ENCODE measurements at regions of chr6 and their contacts with region 1.

Region 1: GRCh38 chr6:105992315-105992961 is 93.7 kb upstream of the PRDM1 start:
- DNase-seq: peak; percentile 90
- H3K4me3 Mint-ChIP-seq: peak overlapping the region; percentile 88
- H3K27ac Mint-ChIP-seq: peak overlapping the region; percentile 74
- H3K4me1 Mint-ChIP-seq: peaks cover 22% of the 10 kb centered on the region
- H3K27me3 Mint-ChIP-seq: peaks cover 72% of the 10 kb centered on the region

Region 2: GRCh38 chr6:105492706-105493673 is 499.4 kb before region 1 on chr6:
- CTCF ChIA-PET with region 1: no interaction called
- intact Hi-C with region 1: loop called (anchors 5 kb)
- DNase-seq: peak; percentile 7
- H3K4me3 Mint-ChIP-seq: no peak overlapping the region
- H3K27ac Mint-ChIP-seq: no peak overlapping the region
- H3K4me1 Mint-ChIP-seq: peaks cover 6% of the 10 kb centered on the region
- H3K27me3 Mint-ChIP-seq: no peaks in the 10 kb centered on the region

Region 3: DNA sequence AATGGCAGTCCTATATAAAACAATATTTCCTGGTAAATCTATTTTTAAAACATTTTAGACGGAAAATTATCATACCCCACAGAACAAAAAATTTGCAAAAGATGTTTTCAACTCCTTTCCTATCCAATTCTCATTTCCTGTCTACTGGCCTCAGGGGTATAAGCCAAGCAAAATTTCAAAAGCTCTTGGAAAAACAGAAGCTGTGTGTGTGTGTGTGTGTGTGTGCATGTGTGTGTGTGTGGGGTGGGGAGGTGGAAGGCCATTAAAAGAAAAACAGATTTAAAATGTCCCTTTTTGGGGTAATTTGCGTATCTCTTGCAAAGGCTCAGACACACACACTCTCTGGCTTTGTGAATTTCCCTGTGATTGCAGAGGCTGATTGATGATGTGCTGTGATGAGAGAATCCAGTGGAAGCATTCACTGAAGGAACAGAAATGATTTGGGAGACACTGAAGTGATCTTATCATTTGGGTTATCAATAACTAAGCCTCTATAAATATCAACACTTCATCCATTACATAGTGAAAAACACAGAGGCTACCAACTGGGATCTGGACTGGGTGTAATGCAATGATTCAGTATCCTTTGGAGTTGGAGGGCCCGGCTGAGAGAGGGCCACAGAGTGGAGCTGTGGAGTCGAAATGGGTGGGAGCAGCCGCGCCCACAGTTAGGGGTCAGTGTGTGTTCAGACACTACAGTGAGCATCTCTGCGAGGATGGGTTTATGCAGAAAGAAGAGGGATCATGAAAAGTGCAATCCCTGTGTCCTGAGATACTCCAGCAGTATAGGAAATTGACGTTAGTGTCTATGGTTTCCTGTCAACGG is 482.7 kb before region 1 on chr6:
- CTCF ChIA-PET with region 1: no interaction called
- intact Hi-C with region 1: no loop called
- DNase-seq: no peak
- H3K4me3 Mint-ChIP-seq: no peak overlapping the region
- H3K27ac Mint-ChIP-seq: no peak overlapping the region
- H3K4me1 Mint-ChIP-seq: no peaks in the 10 kb centered on the region
- H3K27me3 Mint-ChIP-seq: peaks cover 20% of the 10 kb centered on the region

Region 4: GRCh38 chr6:105536961-105537360 is 455.5 kb before region 1 on chr6:
- CTCF ChIA-PET with region 1: no interaction called
- intact Hi-C with region 1: no loop called
- DNase-seq: no peak
- H3K4me3 Mint-ChIP-seq: no peak overlapping the region
- H3K27ac Mint-ChIP-seq: no peak overlapping the region
- H3K4me1 Mint-ChIP-seq: no peaks in the 10 kb centered on the region
- H3K27me3 Mint-ChIP-seq: peaks cover 2% of the 10 kb centered on the region

Region 5: DNA sequence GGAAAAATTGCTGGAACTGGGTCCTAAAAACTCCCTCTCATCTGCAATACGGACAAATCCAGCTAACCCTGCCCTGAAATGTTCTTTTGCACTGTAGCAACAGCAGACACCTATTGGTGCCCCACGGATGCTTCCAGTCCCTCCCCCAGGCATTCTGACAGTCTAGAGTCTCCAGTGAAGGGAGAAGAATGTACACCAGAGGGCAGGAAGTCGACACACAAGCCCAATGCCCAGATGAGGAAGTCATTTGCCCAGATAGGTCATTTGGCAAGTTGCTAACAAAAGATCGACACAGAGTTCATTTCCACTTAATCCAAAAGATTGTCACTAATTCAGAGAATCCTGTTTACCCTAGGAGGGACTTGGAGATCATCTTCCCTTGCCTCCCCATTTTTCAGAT is 199.3 kb before region 1 on chr6:
- CTCF ChIA-PET with region 1: no interaction called
- intact Hi-C with region 1: loop called (anchors 5 kb)
- DNase-seq: peak; percentile 30
- H3K4me3 Mint-ChIP-seq: no peak overlapping the region
- H3K27ac Mint-ChIP-seq: no peak overlapping the region
- H3K4me1 Mint-ChIP-seq: peaks cover 43% of the 10 kb centered on the region
- H3K27me3 Mint-ChIP-seq: no peaks in the 10 kb centered on the region

Region 6: GRCh38 chr6:105981002-105981887 is 11.2 kb before region 1 on chr6:
- CTCF ChIA-PET with region 1: interaction called, 5 read pairs
- intact Hi-C with region 1: loop called (anchors 1 kb)
- DNase-seq: peak; percentile 58
- H3K4me3 Mint-ChIP-seq: peak overlapping the region; percentile 62
- H3K27ac Mint-ChIP-seq: peak overlapping the region; percentile 79
- H3K4me1 Mint-ChIP-seq: peaks cover 26% of the 10 kb centered on the region
- H3K27me3 Mint-ChIP-seq: peaks cover 52% of the 10 kb centered on the region

Region 7: DNA sequence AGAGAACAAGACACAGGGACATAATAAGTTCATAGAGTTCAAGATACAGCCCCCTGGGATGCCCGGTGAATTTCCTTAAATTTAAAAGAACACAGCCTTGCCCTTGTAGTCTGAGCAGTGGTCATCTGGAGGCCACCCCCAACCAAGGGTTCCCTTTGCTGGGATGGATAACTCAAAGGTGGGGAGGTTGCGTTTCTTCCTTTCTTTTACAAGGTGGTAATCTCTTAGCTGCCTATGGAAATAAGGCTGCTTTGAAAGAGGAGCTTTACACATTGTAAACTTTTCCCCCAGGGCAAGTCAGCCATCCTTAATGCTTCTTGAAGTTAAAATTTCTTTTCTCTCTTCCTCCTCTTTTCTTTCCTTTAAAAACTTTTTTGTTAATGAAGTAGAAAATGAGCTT is 22.5 kb after region 1 on chr6:
- CTCF ChIA-PET with region 1: no interaction called
- intact Hi-C with region 1: no loop called
- DNase-seq: no peak
- H3K4me3 Mint-ChIP-seq: no peak overlapping the region
- H3K27ac Mint-ChIP-seq: no peak overlapping the region
- H3K4me1 Mint-ChIP-seq: no peaks in the 10 kb centered on the region
- H3K27me3 Mint-ChIP-seq: peaks cover 7% of the 10 kb centered on the region

Region 8: GRCh38 chr6:106026748-106027715 is 34.6 kb after region 1 on chr6:
- CTCF ChIA-PET with region 1: no interaction called
- intact Hi-C with region 1: no loop called
- DNase-seq: no peak
- H3K4me3 Mint-ChIP-seq: no peak overlapping the region
- H3K27ac Mint-ChIP-seq: no peak overlapping the region
- H3K4me1 Mint-ChIP-seq: no peaks in the 10 kb centered on the region
- H3K27me3 Mint-ChIP-seq: no peaks in the 10 kb centered on the region

Region 9: DNA sequence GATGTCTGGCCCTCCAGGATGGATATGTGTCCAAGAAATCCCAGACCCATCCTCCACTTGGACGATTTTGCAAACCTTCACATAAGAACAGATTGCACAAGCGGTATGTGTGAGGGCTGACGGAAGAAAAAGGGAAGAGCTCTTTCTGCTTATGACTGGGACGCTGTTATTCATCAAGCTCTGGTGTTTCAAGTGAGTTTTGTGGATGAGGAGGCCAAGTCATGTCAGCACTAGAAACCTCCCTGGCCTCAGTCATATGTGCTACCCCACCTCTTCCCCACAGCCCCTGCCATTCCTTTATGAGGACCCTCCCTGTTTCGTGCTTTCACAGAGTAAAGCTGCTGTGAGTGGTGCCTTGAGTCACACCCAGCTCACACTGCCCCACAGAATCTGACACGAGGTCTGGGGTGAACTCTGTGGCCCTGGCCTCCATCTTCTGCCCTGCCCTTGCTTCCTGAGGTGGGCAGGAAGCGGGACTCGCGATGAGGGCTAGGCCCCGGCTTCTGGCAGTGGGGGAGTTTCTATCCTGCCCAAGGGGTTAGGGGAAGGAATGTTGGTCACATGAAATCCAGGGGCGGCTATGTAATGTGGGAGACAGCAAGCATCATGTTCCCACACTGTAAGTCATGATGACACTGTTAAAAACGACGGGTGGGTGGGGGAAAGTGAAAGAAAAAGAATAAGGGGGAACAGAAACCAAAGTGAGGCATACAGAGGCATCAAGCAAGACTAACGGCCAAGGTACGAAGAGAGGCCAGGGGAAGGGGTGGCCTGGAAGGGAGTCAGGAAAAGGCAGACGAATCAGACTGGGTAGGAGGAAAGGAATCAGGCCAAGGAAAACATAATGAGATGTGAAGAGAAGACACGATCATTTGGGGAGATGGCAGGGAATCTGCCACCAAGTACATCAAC is 171.8 kb after region 1 on chr6:
- CTCF ChIA-PET with region 1: no interaction called
- intact Hi-C with region 1: loop called (anchors 1 kb)
- DNase-seq: peak; percentile 80
- H3K4me3 Mint-ChIP-seq: peak overlapping the region; percentile 36
- H3K27ac Mint-ChIP-seq: peak overlapping the region; percentile 78
- H3K4me1 Mint-ChIP-seq: peaks cover 35% of the 10 kb centered on the region
- H3K27me3 Mint-ChIP-seq: peaks cover 2% of the 10 kb centered on the region

Region 10: DNA sequence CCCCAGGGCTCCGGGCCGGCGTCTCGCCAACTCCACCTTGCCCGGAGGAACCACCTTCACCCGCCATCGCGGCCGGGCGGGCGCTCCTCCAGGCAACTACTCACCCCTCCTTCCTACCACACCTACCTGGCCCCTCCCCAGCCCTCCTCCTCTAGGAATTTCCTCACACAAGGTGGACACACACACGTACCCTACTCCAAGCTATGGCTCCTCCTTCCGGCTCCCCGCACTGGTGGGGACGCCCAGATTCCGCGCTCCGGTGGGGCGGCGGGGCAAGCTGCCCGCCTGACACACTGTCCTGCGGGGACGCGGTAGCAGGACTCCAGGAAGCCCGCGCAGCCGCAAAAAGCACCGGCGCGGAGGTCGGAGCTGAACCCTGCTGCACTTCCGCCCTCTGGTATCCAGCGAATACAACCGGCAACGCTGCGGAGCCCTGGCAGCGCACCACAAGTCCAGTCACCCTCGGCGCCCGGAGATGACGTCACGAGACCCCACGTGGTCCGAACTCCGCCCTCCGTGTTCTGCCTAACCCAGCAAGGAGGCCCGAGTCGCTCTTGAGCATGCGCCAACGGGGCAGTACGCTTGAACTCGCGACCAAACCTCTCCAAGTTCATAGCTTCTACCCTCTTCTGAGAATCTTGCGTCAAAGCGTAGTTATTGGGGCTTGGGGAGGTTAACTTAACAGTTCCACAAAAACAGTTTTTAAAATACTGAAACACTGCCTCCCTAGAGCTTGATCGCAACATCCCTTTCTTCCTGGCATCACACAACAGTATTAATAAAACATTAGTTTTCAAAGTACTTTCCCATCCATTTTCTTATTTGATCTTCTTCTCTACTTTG is 333.1 kb after region 1 on chr6 and contains the start of gene ATG5:
- CTCF ChIA-PET with region 1: no interaction called
- intact Hi-C with region 1: loop called (anchors 5 kb)
- DNase-seq: peak; percentile 100
- H3K4me3 Mint-ChIP-seq: peak within 1 kb of the TSS; percentile 99
- H3K27ac Mint-ChIP-seq: peak within 1 kb of the TSS; percentile 89
- H3K4me1 Mint-ChIP-seq: peaks cover 39% of the 10 kb centered on the region
- H3K27me3 Mint-ChIP-seq: no peaks in the 10 kb centered on the region
- total RNA-seq, gene ATG5: 20.2 to 20.7 TPM